Activated CD4-positive, alpha-beta memory T cell treated with anti-CD3 and anti-CD28 coated beads, Interleukin-2, amount 10 ng/mL, durations not matched to agents 7 days and 5 days (primary cell): ENCODE measurements at regions of chr19 and their contacts with region 1.

Region 1: GRCh38 chr19:12789904-12790619 is 1.2 kb upstream of the JUNB start:
- DNase-seq: peak; percentile 98
- H3K4me3 Mint-ChIP-seq: peak overlapping the region; percentile 93
- H3K27ac Mint-ChIP-seq: peak overlapping the region; percentile 98
- H3K4me1 Mint-ChIP-seq: peaks cover 45% of the 10 kb centered on the region
- H3K27me3 Mint-ChIP-seq: no peaks in the 10 kb centered on the region

Region 2: DNA sequence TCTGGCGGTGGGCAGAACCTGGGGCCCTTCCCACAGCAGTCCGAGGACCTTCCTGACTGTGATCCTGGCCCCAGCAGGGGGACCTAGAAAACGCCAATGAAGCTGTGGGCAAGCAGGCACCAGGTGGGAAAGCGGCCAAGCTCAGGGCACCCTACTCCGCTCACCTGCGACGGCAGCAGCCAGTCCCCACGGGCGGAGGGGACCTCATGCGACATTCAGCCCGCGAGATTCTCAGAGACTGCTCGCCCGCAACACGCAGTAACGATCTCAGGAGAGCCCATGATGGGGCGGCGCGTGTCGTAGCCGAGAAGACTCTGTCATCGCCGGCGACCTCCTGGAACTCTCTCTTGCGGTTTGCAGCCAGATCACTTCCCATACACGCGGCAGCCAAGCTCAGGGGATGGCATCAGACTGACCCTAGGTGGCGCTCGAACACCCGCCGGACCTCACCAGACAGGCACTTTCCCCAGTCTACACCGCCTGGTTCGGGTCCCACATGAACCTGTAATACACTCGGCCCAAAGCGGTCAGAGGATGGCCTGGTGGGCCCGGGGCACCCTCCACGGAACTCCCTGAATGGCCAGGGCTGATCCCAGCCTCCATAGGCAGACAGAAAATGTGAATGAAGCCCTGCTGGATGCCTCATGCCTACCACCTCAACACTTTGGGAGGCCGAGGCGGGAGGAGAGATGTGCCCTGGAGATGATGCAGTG is 150.0 kb before region 1 on chr19:
- CTCF ChIA-PET with region 1: no interaction called
- POLR2A ChIA-PET with region 1: no interaction called
- DNase-seq: peak; percentile 87
- H3K4me3 Mint-ChIP-seq: peak overlapping the region; percentile 58
- H3K27ac Mint-ChIP-seq: peak overlapping the region; percentile 33
- H3K4me1 Mint-ChIP-seq: peaks cover 15% of the 10 kb centered on the region
- H3K27me3 Mint-ChIP-seq: no peaks in the 10 kb centered on the region

Region 3: GRCh38 chr19:12681074-12681951 is 108.7 kb before region 1 on chr19 and contains the start of gene DHPS:
- CTCF ChIA-PET with region 1: no interaction called
- POLR2A ChIA-PET with region 1: interaction called, 11 read pairs
- DNase-seq: peak; percentile 94
- H3K4me3 Mint-ChIP-seq: peak within 1 kb of the TSS; percentile 94
- H3K27ac Mint-ChIP-seq: peak within 1 kb of the TSS; percentile 95
- H3K4me1 Mint-ChIP-seq: peaks cover 28% of the 10 kb centered on the region
- H3K27me3 Mint-ChIP-seq: no peaks in the 10 kb centered on the region
- total RNA-seq, gene DHPS: 106 to 113 TPM

Region 4: GRCh38 chr19:12757544-12758274 is 32.4 kb before region 1 on chr19:
- CTCF ChIA-PET with region 1: interaction called, 419 read pairs
- POLR2A ChIA-PET with region 1: interaction called, 8 read pairs
- DNase-seq: peak; percentile 71
- H3K4me3 Mint-ChIP-seq: peak overlapping the region; percentile 49
- H3K27ac Mint-ChIP-seq: no peak overlapping the region
- H3K4me1 Mint-ChIP-seq: peaks cover 11% of the 10 kb centered on the region
- H3K27me3 Mint-ChIP-seq: peaks cover 4% of the 10 kb centered on the region

Region 5: GRCh38 chr19:12777217-12778016 is 12.6 kb before region 1 on chr19:
- CTCF ChIA-PET with region 1: interaction called, 183 read pairs
- POLR2A ChIA-PET with region 1: interaction called, 574 read pairs
- DNase-seq: peak; percentile 85
- H3K4me3 Mint-ChIP-seq: peak overlapping the region; percentile 83
- H3K27ac Mint-ChIP-seq: peak overlapping the region; percentile 92
- H3K4me1 Mint-ChIP-seq: peaks cover 44% of the 10 kb centered on the region
- H3K27me3 Mint-ChIP-seq: no peaks in the 10 kb centered on the region

Region 6: GRCh38 chr19:12847159-12848139 is 57.4 kb after region 1 on chr19:
- CTCF ChIA-PET with region 1: interaction called, 13 read pairs
- POLR2A ChIA-PET with region 1: interaction called, 6 read pairs
- DNase-seq: peak; percentile 83
- H3K4me3 Mint-ChIP-seq: peak overlapping the region; percentile 21
- H3K27ac Mint-ChIP-seq: no peak overlapping the region
- H3K4me1 Mint-ChIP-seq: peaks cover 7% of the 10 kb centered on the region
- H3K27me3 Mint-ChIP-seq: peaks cover 13% of the 10 kb centered on the region

Region 7: GRCh38 chr19:13033819-13034611 is 244.0 kb after region 1 on chr19:
- CTCF ChIA-PET with region 1: no interaction called
- POLR2A ChIA-PET with region 1: no interaction called
- DNase-seq: peak; percentile 42
- H3K4me3 Mint-ChIP-seq: no peak overlapping the region
- H3K27ac Mint-ChIP-seq: no peak overlapping the region
- H3K4me1 Mint-ChIP-seq: peaks cover 2% of the 10 kb centered on the region
- H3K27me3 Mint-ChIP-seq: peaks cover 4% of the 10 kb centered on the region